Activated B cell treated with CpG ODN at 0.5 μM for 24 hours (primary cell): ENCODE measurements at regions of chr3 and their contacts with region 1.

Region 1: GRCh38 chr3:65785065-65785645 is 253.6 kb downstream of the MAGI1 start:
- DNase-seq: no peak
- ATAC-seq: no peak
- H3K4me3 Mint-ChIP-seq: no peak overlapping the region
- H3K27ac Mint-ChIP-seq: no peak overlapping the region
- H3K4me1 Mint-ChIP-seq: no peaks in the 10 kb centered on the region
- H3K27me3 Mint-ChIP-seq: no peaks in the 10 kb centered on the region
- CTCF ChIP-seq: no peak

Region 2: DNA sequence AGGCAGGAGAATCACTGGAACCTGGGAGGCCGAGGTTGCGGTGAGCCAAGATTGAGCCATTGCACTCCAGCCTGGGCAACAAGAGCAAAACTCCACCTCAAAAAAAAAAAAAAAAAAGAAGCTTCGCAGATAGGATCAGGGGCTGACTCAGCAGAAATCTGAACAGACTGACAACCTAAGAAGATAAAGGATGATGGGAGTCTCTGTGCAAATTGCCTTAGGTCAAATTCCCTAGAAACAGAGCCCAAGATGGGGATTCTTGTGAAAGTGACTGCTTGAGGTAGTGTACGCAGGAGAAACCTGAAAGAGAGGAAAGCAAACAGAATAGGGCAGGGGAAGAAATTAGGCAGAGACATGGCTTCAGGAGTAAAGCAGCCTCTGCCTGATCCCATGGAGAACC is 876.5 kb after region 1 on chr3:
- CTCF ChIA-PET with region 1: no interaction called
- POLR2A ChIA-PET with region 1: no interaction called
- intact Hi-C with region 1: loop called (anchors 5 kb)
- DNase-seq: no peak
- ATAC-seq: no peak
- H3K4me3 Mint-ChIP-seq: no peak overlapping the region
- H3K27ac Mint-ChIP-seq: no peak overlapping the region
- H3K4me1 Mint-ChIP-seq: no peaks in the 10 kb centered on the region
- H3K27me3 Mint-ChIP-seq: peaks cover 6% of the 10 kb centered on the region
- CTCF ChIP-seq: no peak

Region 3: GRCh38 chr3:66816090-66816761 is 1031.1 kb after region 1 on chr3:
- CTCF ChIA-PET with region 1: no interaction called
- POLR2A ChIA-PET with region 1: no interaction called
- intact Hi-C with region 1: loop called (anchors 5 kb)
- DNase-seq: no peak
- ATAC-seq: peak; percentile 56
- H3K4me3 Mint-ChIP-seq: no peak overlapping the region
- H3K27ac Mint-ChIP-seq: no peak overlapping the region
- H3K4me1 Mint-ChIP-seq: no peaks in the 10 kb centered on the region
- H3K27me3 Mint-ChIP-seq: peaks cover 5% of the 10 kb centered on the region
- CTCF ChIP-seq: peak; percentile 78